Adrenal gland (tissue), 19 donors: ENCODE measurements at regions of chr16 and their contacts with region 1.

Region 1: GRCh38 chr16:71456801-71457200 is 5.2 kb downstream of the ZNF23 start:
- DNase-seq: no peak
- H3K4me3 ChIP-seq: no peak overlapping the region
- H3K27ac ChIP-seq: no peak overlapping the region
- H3K4me1 ChIP-seq: peaks cover 0 to 9% of the 10 kb centered on the region in 2 donors
- H3K27me3 ChIP-seq: no peaks in the 10 kb centered on the region
- CTCF ChIP-seq: no peak
- POLR2A ChIP-seq: no peak

Region 2: DNA sequence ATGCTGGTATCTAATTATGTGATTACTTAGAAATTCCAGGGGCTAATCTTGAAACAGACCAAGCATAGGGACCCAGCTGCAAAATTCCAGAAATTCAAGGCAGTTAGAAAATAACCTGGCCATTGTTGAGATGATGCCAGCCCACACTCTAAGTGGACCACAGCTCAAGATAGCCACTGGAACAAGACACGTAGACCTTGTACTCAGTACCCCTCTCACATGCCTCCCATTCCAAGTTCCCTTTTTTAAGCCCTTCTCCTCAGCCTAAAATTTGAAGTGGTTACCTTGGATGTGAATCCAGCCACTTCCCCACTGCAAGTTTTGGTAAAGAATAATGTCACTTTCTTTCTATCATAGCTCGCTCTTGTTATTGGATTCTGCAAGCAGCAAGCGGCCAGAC is 36.4 kb after region 1 on chr16:
- intact Hi-C with region 1: loop called in 1 of 2 experiments (anchors 5 kb)
- DNase-seq: no peak
- H3K4me3 ChIP-seq: no peak overlapping the region
- H3K27ac ChIP-seq: no peak overlapping the region
- H3K4me1 ChIP-seq: no peaks in the 10 kb centered on the region
- H3K27me3 ChIP-seq: no peaks in the 10 kb centered on the region
- CTCF ChIP-seq: no peak
- POLR2A ChIP-seq: no peak